HEK293 (cell line): ENCODE measurements at regions of chr1 and their contacts with region 1.

Region 1: DNA sequence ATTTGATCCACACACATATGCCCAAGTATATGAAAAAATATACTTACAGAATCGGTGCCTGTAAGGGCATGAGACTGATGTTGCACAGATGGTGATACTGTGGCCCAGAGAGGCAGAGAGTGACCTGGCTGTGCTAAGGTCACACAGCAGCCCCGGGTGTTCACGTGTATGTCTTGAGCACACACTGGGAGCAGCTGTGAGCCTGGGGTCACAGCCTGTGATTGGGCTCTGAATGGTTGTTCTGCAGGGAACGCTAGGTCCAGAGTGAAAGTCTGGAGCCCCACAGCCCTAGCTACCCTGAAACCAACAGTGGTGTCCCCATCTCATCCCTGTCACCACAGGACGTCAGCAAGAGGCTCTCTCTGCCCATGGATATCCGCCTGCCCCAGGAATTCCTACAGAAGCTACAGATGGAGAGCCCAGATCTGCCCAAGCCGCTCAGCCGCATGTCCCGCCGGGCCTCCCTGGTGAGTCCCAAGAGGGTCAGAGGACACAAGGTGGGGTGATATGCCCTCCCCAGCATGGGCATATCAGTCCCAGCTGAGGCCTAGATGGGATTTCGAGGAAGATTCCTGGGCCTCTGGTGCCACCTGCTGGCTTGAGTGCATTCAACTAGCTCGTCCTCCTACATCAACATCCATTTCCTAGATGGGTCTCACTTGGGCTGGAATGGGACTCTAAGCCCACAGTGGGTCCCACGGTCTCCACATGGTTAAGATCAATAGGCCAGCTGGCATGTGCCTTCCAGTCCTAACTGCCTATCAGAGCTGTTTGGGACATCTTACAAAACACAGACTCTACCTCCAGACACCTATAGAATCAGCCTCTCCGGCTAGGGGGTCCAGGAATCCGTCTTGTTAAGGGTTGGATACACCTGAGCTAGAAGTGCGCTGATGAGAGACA is 19.7 kb downstream of the CDK18 start:
- H3K4me3 ChIP-seq: no peak overlapping the region
- H3K27ac ChIP-seq: no peak overlapping the region
- H3K4me1 ChIP-seq: peaks cover 8% of the 10 kb centered on the region
- CTCF ChIP-seq: peak; percentile 91

Region 2: DNA sequence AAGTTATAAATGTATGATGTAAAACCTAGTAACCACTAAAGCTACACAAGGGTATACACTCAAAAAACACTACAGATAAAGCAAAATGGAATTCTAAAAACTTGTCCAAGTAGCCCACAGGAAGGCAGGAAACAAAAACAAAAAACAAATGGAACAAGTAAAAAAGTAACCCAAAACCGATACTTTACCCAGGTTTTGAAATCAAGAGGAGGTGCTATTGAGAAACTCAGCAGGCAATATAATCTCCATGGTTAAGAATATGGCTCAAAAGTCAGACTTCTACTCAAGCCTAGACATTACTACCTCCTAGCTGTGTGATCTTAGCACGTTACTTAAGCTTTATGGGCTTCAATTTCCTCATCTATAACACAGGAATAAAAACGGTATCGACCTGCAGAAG is 415.7 kb before region 1 on chr1:
- CTCF ChIA-PET with region 1: no interaction called
- POLR2A ChIA-PET with region 1: no interaction called
- H3K4me3 ChIP-seq: no peak overlapping the region
- H3K27ac ChIP-seq: no peak overlapping the region
- H3K4me1 ChIP-seq: no peaks in the 10 kb centered on the region
- CTCF ChIP-seq: no peak

Region 3: DNA sequence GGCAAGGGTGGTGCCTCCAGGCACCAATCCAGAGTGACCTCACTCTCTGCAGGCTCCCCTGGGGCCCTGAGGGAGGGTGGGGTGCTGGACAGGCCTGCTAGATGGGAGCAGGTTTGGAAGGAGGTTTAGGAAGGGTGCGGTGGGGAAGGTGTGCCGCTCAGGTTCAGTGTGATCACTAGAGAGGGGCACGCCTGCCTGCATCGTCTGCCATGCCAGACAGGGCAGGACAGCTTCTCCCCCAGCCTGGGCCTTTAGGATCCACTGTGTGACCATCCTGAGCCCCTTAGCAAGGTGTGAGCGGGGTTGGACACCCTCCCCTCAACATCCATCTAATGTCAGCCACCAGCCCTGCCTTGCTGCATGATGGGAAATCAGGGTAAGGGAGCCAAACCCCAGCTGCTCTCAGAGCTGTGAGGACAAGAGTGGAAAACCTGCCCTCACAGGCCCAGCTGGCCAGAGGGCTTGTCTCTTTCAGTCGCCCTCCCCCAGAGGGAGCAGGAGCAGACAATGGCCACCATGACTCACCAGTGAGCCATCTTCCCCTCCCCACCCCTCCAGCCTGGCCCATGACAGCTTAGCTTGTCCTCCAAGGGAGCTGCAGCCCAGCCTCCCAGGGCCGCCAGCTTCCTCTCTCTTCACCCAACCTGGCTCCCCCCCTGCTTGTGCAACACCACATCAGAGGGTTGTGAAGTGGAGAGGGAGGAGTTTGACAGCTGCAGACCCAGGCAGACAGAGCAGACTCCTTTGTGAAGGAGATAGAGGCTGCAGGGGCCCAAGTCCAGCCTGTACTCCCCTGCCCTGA is 239.6 kb before region 1 on chr1:
- CTCF ChIA-PET with region 1: interaction called, 10 read pairs
- POLR2A ChIA-PET with region 1: no interaction called
- H3K4me3 ChIP-seq: no peak overlapping the region
- H3K27ac ChIP-seq: no peak overlapping the region
- H3K4me1 ChIP-seq: no peaks in the 10 kb centered on the region
- CTCF ChIP-seq: no peak; the same call in 1 of the 2 replicates

Region 4: DNA sequence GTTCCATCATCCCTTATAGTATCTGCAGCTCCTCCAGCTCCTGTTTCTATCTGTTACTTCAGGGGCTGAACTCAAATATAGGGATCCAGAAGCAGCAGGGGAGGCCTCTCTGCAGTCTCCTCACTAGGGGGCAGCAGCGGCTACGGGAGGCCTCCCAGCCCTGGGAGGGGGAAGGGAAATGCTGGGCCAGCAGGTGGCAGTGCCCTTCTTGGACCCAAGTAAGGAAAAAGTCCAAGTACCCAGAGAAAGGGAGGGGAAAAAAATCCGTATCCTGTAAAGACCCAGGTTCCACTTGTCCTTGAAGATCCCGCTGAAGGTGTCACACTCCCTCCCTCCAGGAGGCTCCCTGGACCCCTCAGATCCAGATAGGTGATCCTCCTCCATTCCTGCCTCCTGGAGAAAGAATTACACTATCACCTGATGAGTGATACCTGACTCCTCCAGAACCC is 188.5 kb before region 1 on chr1:
- CTCF ChIA-PET with region 1: interaction called, 58 read pairs
- POLR2A ChIA-PET with region 1: no interaction called
- H3K4me3 ChIP-seq: no peak overlapping the region
- H3K27ac ChIP-seq: no peak overlapping the region
- H3K4me1 ChIP-seq: 0 out of 2 replicates have a peak, but pooled peaks cover 2% of the 10 kb centered on the region
- CTCF ChIP-seq: peak; percentile 97

Region 5: DNA sequence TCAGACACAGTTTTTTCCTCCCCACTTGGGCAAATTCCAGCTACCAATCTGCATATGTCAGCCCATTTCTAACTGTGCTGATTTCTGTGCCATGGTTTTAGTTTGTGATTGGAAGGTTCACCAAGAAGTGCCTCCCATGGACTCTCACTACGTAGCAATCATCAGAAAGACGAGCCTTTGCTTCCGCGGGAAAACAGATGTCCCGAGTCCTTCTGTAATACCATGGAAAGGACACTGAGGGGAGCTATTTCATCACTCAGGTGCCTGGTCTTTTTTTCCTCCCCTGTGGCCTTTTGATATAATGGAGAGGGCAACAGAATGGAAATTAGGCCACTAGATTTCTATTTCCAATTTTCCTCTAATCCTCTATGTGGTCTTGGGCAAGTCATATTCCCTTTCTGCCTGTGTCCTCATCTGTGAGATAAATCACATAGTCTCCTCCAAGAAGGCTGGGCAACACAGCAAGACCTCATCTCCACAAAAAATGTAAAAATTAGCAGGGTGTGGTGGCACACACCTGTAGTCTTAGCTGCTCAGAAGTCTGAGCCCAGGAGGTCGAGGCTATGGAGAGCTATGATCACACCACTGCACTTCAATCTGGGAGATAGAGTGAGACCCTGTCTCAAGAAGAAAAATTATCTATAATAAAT is 127.0 kb before region 1 on chr1:
- CTCF ChIA-PET with region 1: interaction called, 122 read pairs
- POLR2A ChIA-PET with region 1: no interaction called
- H3K4me3 ChIP-seq: no peak overlapping the region
- H3K27ac ChIP-seq: no peak overlapping the region
- H3K4me1 ChIP-seq: no peaks in the 10 kb centered on the region
- CTCF ChIP-seq: peak; percentile 81

Region 6: GRCh38 chr1:205500240-205501233 is 23.6 kb before region 1 on chr1:
- CTCF ChIA-PET with region 1: interaction called, 459 read pairs
- POLR2A ChIA-PET with region 1: interaction called, 3 read pairs
- H3K4me3 ChIP-seq: no peak overlapping the region
- H3K27ac ChIP-seq: no peak overlapping the region
- H3K4me1 ChIP-seq: peaks cover 6% of the 10 kb centered on the region
- CTCF ChIP-seq: no peak

Region 7: GRCh38 chr1:205591522-205592351 is 67.6 kb after region 1 on chr1:
- CTCF ChIA-PET with region 1: interaction called, 26 read pairs
- POLR2A ChIA-PET with region 1: no interaction called
- H3K4me3 ChIP-seq: peak overlapping the region; percentile 12
- H3K27ac ChIP-seq: no peak overlapping the region
- H3K4me1 ChIP-seq: no peaks in the 10 kb centered on the region; the same call in 1 of the 2 replicates
- CTCF ChIP-seq: peak; percentile 98